ENCODE measurements at regions of chr17 and their contacts with region 1.

Region 1: DNA sequence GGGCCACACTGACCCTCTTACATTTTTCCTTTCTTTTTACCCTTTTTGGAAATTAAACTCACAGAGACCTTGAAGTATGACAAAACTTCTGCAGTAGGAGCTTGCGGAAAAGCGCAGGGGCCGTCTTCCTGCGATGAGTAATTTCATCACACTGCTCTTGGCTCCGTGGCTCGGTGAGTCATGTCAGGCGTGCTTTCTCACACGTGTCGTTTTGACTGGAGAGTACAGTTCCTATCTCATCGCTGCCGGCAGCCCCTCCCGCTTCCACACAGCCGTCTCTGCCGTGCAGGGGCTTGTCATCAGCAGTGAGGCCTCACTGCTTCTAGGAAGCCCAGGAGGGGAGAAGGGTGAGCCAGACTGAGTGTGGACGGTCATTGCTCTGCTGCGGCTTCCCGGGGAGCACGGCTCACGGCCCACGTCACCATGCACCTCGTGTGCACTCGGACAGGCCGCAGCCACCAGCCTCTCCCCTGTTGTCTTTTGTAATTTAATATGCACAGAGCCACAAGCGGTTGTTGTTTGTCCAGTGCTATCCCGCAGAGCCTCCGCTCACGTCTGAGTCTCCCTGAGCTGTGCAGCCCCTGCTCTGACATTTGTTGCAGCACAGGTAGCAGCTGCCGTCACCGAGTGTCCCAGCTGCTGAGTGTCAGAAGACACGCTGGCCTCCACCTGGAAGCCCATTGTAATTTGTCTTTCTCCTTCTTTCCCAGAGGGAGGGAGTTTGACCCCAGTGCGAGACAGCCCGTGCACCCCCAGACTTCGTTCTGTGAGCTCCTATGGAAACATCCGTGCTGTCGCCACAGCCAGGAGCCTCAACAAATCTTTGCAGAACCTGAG is 99.4 kb upstream of the CHMP6 start:
- DNase-seq: no peak
- ATAC-seq: peak; percentile 90
- H3K4me3 Mint-ChIP-seq: peak overlapping the region; percentile 35
- H3K27ac Mint-ChIP-seq: peak overlapping the region; percentile 46
- H3K4me1 Mint-ChIP-seq: peaks cover 19% of the 10 kb centered on the region
- H3K27me3 Mint-ChIP-seq: no peaks in the 10 kb centered on the region
- CTCF ChIP-seq: no peak

Region 2: DNA sequence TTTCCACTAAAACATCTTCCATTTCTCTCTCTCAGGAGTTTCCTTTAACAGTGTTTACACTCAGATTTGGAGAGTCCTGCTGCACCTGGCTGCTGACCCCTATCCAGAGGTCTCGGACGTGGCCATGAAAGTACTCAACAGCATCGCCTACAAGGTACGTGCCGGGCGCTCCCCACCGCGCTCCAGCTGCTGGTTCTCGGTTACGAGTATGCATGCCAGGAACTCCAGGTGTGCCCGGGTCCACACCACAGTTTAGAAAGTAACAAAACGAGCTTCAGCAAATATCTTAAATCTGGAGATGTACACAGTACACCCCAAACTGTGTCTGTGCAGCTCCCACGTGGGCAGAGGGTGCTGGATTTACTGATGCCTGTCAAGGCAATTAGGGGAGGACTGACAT is 16.5 kb after region 1 on chr17:
- CTCF ChIA-PET with region 1: interaction called, 6 read pairs
- POLR2A ChIA-PET with region 1: interaction called, 17 read pairs
- intact Hi-C with region 1: loop called (anchors 1 kb)
- DNase-seq: no peak
- ATAC-seq: no peak
- H3K4me3 Mint-ChIP-seq: no peak overlapping the region
- H3K27ac Mint-ChIP-seq: no peak overlapping the region
- H3K4me1 Mint-ChIP-seq: peaks cover 56% of the 10 kb centered on the region
- H3K27me3 Mint-ChIP-seq: no peaks in the 10 kb centered on the region
- CTCF ChIP-seq: no peak